PC-9 (cell line): ENCODE measurements at regions of chr1 and their contacts with region 1.

Region 1: GRCh38 chr1:205485338-205486228 is 18.9 kb upstream of the CDK18 start:
- DNase-seq: peak; percentile 73 to 74
- H3K4me3 ChIP-seq: no peak overlapping the region
- H3K27ac ChIP-seq: no peak overlapping the region
- H3K4me1 ChIP-seq: no peaks in the 10 kb centered on the region
- H3K27me3 ChIP-seq: no peaks in the 10 kb centered on the region
- CTCF ChIP-seq: peak; percentile 97

Region 2: GRCh38 chr1:204162231-204163074 is 1323.1 kb before region 1 on chr1:
- CTCF ChIA-PET with region 1: interaction called, 16 read pairs
- POLR2A ChIA-PET with region 1: no interaction called
- intact Hi-C with region 1: no loop called
- DNase-seq: peak; percentile 93 to 94
- H3K4me3 ChIP-seq: no peak overlapping the region
- H3K27ac ChIP-seq: 0 out of 2 replicates have a peak overlapping the region, but pooled peaks have one; percentile 28
- H3K4me1 ChIP-seq: peaks cover 21% of the 10 kb centered on the region
- H3K27me3 ChIP-seq: no peaks in the 10 kb centered on the region
- CTCF ChIP-seq: peak; percentile 99

Region 3: GRCh38 chr1:205335643-205336091 is 149.9 kb before region 1 on chr1:
- CTCF ChIA-PET with region 1: interaction called, 14 read pairs
- POLR2A ChIA-PET with region 1: no interaction called
- intact Hi-C with region 1: loop called (anchors 1 kb)
- DNase-seq: peak; percentile 63 to 85
- H3K4me3 ChIP-seq: no peak overlapping the region
- H3K27ac ChIP-seq: no peak overlapping the region
- H3K4me1 ChIP-seq: peaks cover 3% of the 10 kb centered on the region
- H3K27me3 ChIP-seq: peaks cover under 1% of the 10 kb centered on the region; the same call in 1 of the 2 replicates
- CTCF ChIP-seq: peak; percentile 88

Region 4: GRCh38 chr1:205396967-205397616 is 88.5 kb before region 1 on chr1:
- CTCF ChIA-PET with region 1: interaction called, 24 read pairs
- POLR2A ChIA-PET with region 1: interaction called, 3 read pairs
- intact Hi-C with region 1: loop called (anchors 1 kb)
- DNase-seq: peak; percentile 30 to 51
- H3K4me3 ChIP-seq: no peak overlapping the region
- H3K27ac ChIP-seq: no peak overlapping the region
- H3K4me1 ChIP-seq: no peaks in the 10 kb centered on the region
- H3K27me3 ChIP-seq: no peaks in the 10 kb centered on the region
- CTCF ChIP-seq: peak; percentile 89

Region 5: DNA sequence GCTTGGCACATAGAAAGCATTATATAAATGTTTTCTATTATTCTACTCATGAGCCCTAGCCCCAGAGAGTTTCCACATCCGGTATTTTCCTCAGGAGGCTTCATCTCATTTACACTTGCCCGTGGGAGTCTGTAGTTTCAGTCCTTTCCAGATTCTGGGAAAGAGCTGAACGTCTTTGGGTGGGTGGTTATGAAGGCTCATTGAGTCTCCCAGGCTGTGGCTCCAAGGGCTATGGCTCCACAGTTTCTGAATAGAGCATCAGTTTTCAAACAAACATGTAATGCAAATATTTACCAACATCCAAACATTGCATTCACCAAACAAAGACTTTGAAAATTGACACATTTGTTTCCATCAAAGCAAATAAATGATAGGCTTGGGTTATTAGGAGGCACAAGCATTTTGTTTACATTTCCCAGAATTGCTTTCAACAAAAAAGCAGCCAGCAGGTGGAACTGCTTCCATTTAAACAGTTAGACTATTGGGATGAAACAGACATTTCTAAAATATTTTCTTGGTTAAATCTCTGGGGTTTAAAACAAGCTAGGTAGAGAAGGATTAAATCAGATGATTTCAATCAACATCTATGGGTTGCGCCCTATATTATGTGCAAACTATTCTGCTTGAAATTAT is 62.5 kb before region 1 on chr1:
- CTCF ChIA-PET with region 1: interaction called, 3 read pairs
- POLR2A ChIA-PET with region 1: no interaction called
- intact Hi-C with region 1: loop called (anchors 1 kb)
- DNase-seq: no peak
- H3K4me3 ChIP-seq: no peak overlapping the region
- H3K27ac ChIP-seq: no peak overlapping the region
- H3K4me1 ChIP-seq: no peaks in the 10 kb centered on the region
- H3K27me3 ChIP-seq: peaks cover 49% of the 10 kb centered on the region; the same call in 1 of the 2 replicates
- CTCF ChIP-seq: peak; percentile 56

Region 6: DNA sequence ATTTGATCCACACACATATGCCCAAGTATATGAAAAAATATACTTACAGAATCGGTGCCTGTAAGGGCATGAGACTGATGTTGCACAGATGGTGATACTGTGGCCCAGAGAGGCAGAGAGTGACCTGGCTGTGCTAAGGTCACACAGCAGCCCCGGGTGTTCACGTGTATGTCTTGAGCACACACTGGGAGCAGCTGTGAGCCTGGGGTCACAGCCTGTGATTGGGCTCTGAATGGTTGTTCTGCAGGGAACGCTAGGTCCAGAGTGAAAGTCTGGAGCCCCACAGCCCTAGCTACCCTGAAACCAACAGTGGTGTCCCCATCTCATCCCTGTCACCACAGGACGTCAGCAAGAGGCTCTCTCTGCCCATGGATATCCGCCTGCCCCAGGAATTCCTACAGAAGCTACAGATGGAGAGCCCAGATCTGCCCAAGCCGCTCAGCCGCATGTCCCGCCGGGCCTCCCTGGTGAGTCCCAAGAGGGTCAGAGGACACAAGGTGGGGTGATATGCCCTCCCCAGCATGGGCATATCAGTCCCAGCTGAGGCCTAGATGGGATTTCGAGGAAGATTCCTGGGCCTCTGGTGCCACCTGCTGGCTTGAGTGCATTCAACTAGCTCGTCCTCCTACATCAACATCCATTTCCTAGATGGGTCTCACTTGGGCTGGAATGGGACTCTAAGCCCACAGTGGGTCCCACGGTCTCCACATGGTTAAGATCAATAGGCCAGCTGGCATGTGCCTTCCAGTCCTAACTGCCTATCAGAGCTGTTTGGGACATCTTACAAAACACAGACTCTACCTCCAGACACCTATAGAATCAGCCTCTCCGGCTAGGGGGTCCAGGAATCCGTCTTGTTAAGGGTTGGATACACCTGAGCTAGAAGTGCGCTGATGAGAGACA is 38.6 kb after region 1 on chr1:
- CTCF ChIA-PET with region 1: interaction called, 22 read pairs
- POLR2A ChIA-PET with region 1: no interaction called
- intact Hi-C with region 1: loop called (anchors 1 kb)
- DNase-seq: peak; percentile 61 to 72
- H3K4me3 ChIP-seq: no peak overlapping the region
- H3K27ac ChIP-seq: no peak overlapping the region
- H3K4me1 ChIP-seq: no peaks in the 10 kb centered on the region
- H3K27me3 ChIP-seq: no peaks in the 10 kb centered on the region
- CTCF ChIP-seq: peak; percentile 90